ENCODE measurements at regions of chr1 and their contacts with region 1.

Region 1: GRCh38 chr1:21022279-21023040 is 154.2 kb downstream of the EIF4G3 start:
- DNase-seq: peak; percentile 71

Region 2: DNA sequence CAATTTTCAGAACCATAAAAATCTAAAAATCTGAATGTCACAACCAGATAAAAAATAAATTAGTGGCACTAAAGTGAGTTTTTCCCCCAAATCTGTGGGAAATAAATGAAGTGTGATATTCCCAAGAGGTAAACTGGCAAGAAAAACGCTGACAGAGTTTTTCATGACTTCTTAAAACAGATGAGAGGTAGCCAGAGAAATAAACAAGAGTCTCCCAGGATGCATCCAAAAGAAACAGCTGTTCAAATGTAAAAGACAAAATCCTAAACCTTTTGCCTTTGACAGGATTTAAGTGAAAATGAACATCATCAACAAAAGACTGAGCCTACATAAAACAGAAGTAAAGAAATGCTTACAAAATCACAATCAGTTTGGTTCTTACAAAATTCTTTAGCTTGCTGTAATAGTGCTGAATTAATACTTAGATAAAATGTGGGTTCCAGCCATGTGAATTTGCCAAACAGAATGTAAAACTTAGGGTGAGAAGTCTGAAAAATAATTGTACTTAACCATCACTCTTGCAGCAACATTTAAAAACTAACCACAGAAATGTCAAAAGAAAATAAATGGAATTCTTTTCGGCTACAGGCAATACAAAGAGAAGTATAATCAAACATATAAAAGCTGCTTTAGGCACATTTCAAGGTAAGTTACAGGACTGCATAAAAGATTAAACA is 20.6 kb after region 1 on chr1:
- CTCF ChIA-PET with region 1: interaction called, 10 read pairs
- POLR2A ChIA-PET with region 1: no interaction called
- DNase-seq: no peak

Region 3: GRCh38 chr1:21149862-21150432 is 127.5 kb after region 1 on chr1:
- CTCF ChIA-PET with region 1: no interaction called
- POLR2A ChIA-PET with region 1: no interaction called
- DNase-seq: no peak